CD14-positive monocyte (primary cell): ENCODE measurements at regions of chr19 and their contacts with region 1.

Region 1: GRCh38 chr19:1896508-1896907 is 8.7 kb upstream of the ADAT3 start:
- DNase-seq: no peak
- H3K4me3 ChIP-seq: peak overlapping the region in 1 of 3 experiments; percentile 57
- H3K4me3 Mint-ChIP-seq: peak overlapping the region in 1 of 2 donors; percentile 26
- H3K27ac ChIP-seq: peak overlapping the region; percentile 79 to 85
- H3K27ac Mint-ChIP-seq: peak overlapping the region; percentile 81 to 99 (median 95)
- H3K4me1 ChIP-seq: peaks cover 49 to 54% of the 10 kb centered on the region in 2 donors
- H3K4me1 Mint-ChIP-seq: peaks cover 47% of the 10 kb centered on the region
- H3K27me3 ChIP-seq: no peaks in the 10 kb centered on the region
- H3K27me3 Mint-ChIP-seq: peaks cover 0 to 5% (median 0%) of the 10 kb centered on the region in 3 donors
- CTCF ChIP-seq: no peak

Region 2: GRCh38 chr19:1690699-1691307 is 205.7 kb before region 1 on chr19:
- intact Hi-C with region 1: no loop called
- DNase-seq: peak; percentile 26 to 55 (median 29)
- H3K4me3 ChIP-seq: no peak overlapping the region
- H3K4me3 Mint-ChIP-seq: peak overlapping the region in 1 of 2 donors; percentile 67
- H3K27ac ChIP-seq: no peak overlapping the region
- H3K27ac Mint-ChIP-seq: no peak overlapping the region
- H3K4me1 ChIP-seq: peaks cover 7 to 8% of the 10 kb centered on the region in 2 donors
- H3K4me1 Mint-ChIP-seq: peaks cover 6% of the 10 kb centered on the region
- H3K27me3 ChIP-seq: peaks cover 0 to 30% of the 10 kb centered on the region in 2 donors
- H3K27me3 Mint-ChIP-seq: peaks cover 58 to 80% (median 66%) of the 10 kb centered on the region in 3 donors
- CTCF ChIP-seq: no peak

Region 3: DNA sequence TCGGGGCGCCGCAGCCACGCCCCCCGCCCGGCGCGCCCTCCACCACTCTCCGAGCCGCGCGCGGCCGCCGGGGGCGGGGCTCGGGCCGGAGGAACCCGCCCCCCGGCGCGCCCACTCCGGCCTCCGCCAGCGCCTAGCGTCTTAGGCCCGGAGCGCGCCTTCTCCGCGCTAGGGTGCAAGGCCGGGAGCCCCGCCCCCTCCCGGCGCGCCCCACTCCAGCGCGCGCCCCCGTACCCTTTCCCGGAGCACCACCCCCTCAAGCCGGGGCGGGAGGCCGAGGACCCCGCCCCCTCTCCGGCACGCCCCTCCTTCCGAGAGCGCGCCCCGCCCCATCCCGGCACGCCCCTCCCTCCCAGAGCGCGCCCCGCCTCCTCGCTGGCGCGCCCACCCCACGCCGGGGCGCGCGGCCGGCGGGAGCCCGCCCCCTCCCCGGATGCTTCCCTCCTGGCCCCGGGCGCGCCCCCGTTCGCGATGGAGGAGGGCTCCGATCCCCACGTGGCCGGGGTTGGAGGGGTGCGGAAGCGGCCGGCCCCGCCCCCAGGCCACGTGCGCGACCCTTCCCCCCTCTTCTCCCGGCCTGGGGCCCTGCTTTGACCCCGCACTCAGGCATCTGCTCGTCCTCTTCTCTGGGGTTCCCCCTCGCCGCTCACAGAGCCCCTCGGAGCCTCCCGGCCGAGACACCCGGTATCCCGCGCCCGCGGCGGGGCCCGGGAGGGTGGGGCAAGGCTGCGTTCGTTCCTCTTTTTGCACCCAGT is 32.6 kb before region 1 on chr19:
- intact Hi-C with region 1: loop called in 1 of 2 experiments (anchors 5 kb)
- DNase-seq: peak; percentile 84 to 92 (median 90)
- H3K4me3 ChIP-seq: peak overlapping the region; percentile 67 to 93 (median 93)
- H3K4me3 Mint-ChIP-seq: peak overlapping the region; percentile 80 to 81
- H3K27ac ChIP-seq: peak overlapping the region; percentile 92 to 97
- H3K27ac Mint-ChIP-seq: peak overlapping the region; percentile 54 to 95 (median 92)
- H3K4me1 ChIP-seq: peaks cover 45 to 47% of the 10 kb centered on the region in 2 donors
- H3K4me1 Mint-ChIP-seq: peaks cover 39% of the 10 kb centered on the region
- H3K27me3 ChIP-seq: no peaks in the 10 kb centered on the region
- H3K27me3 Mint-ChIP-seq: peaks cover 0 to 4% (median 2%) of the 10 kb centered on the region in 3 donors
- CTCF ChIP-seq: no peak

Region 4: DNA sequence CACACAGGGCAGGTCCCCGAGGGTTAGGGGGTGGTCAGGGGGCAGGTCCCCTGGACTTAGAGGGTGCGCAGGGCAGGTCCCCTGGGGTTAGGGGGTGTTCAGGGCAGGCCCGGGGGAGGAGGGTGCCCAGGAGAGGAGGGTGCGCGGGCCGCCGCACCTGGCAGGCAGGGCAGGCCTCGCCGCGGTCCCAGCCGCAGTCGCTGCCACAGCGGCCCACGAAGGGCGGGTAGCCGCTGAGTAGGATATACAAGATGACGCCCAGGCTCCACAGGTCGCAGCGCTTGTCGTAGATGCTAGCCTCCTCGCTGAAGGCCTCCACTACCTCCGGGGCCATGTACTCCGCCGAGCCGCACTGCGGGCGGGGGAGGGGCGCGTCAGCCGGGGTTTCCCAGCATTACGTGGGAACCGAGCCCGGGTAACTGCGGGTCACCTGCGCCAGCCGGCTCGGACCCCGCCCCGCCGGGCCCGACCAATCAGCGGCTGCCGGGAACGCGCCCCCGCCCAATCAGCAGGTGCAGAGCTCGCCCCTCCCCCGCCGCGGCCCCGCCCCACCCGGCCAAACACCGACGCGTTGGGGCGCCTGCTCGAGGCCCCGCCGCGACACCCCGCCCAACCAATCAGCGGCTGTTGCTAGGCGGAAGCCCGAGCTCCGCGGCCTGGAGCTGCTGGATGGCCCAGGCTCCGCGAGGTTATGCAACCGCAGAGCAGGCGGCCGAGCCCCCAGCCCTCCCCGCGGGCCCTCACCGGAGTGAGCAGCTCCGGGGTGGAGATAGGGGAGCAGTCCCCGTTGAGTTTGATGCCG is 145.4 kb after region 1 on chr19:
- intact Hi-C with region 1: loop called in 1 of 2 experiments (anchors 10 kb)
- DNase-seq: peak; percentile 97 to 99 (median 98)
- H3K4me3 ChIP-seq: peak overlapping the region; percentile 10 to 66 (median 13)
- H3K4me3 Mint-ChIP-seq: peak overlapping the region; percentile 58 to 71
- H3K27ac ChIP-seq: peak overlapping the region; percentile 81 to 96
- H3K27ac Mint-ChIP-seq: peak overlapping the region; percentile 89 to 94 (median 92)
- H3K4me1 ChIP-seq: peaks cover 21 to 26% of the 10 kb centered on the region in 2 donors
- H3K4me1 Mint-ChIP-seq: peaks cover 26% of the 10 kb centered on the region
- H3K27me3 ChIP-seq: no peaks in the 10 kb centered on the region
- H3K27me3 Mint-ChIP-seq: peaks cover 0 to 2% (median 0%) of the 10 kb centered on the region in 3 donors
- CTCF ChIP-seq: no peak